K562 (cell line): ENCODE measurements at regions of chr21 and their contacts with region 1.

Region 1: DNA sequence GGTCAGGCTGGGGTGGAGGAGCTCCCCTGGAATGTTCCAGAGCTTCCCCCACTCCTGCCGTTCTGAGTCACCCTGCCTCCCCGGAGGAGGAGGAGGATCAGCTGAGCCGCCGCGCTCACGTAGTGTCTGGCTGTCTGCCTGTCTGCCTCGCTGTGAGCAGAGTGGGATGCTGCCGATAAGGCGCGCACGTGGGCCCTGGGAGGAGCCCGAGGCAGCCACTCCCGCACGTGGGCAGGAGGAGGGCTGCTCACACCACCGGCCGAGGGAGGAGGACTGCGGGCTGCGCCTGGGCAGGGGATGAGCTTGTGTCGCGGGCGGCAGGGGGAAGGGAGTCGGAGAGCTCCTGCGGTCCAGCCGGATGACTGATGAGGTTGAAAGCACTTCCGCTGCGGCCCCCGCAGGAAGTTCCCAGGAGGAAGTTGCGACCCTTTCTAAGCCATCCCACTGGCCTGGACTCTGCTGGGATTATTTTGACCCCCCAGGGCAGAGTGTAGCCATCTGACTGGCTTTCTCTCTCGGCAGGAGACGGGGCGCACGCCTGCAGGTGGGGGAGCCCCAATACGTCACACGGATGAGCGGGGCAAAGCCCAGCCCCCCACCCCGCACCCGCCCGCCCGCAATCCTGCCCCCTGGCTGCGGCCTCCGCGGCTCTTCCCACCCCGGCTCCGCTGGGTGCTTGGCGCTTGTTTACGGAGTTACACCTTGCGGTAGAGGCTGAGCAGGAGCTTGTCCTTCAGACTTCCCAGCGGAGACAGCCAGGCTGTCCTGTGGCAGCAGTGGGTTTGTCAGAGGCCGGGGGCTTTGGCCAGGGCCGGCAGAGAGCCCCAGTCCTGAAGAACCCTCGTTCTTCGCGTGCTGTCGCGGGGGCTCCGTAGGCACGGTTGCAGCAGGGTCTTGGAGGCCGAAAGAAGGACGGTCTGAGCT is 9.8 kb downstream of the PDXK start:
- DNase-seq: peak; percentile 95 to 99 (median 96)
- ATAC-seq: peak; percentile 97
- H3K4me3 ChIP-seq: peak overlapping the region; percentile 62
- H3K27ac ChIP-seq: peak overlapping the region; percentile 79
- H3K4me1 ChIP-seq: peaks cover 25 to 59% of the 10 kb centered on the region in 2 experiments
- H3K27me3 ChIP-seq: no peaks in the 10 kb centered on the region
- CTCF ChIP-seq: peak in 2 of 3 experiments; percentile 24 to 54; a peak in 3 of 6 replicates
- EP300 ChIP-seq: peak; percentile 81
- POLR2A ChIP-seq: peak; percentile 72
- RAD21 ChIP-seq: peak in 1 of 2 experiments; percentile 51; a peak in 2 of 4 replicates

Region 2: GRCh38 chr21:43664358-43664757 is 64.4 kb before region 1 on chr21:
- CTCF ChIA-PET with region 1: no interaction called
- POLR2A ChIA-PET with region 1: interaction called, 5 read pairs
- in situ Hi-C with region 1: no loop called
- intact Hi-C with region 1: loop called (anchors 5 kb)
- DNase-seq: no peak
- ATAC-seq: no peak
- H3K4me3 ChIP-seq: no peak overlapping the region
- H3K27ac ChIP-seq: no peak overlapping the region
- H3K4me1 ChIP-seq: peaks cover 4 to 6% of the 10 kb centered on the region in 2 experiments; a peak in 3 of 5 replicates
- H3K27me3 ChIP-seq: no peaks in the 10 kb centered on the region
- CTCF ChIP-seq: no peak
- EP300 ChIP-seq: no peak
- POLR2A ChIP-seq: no peak
- RAD21 ChIP-seq: no peak

Region 3: DNA sequence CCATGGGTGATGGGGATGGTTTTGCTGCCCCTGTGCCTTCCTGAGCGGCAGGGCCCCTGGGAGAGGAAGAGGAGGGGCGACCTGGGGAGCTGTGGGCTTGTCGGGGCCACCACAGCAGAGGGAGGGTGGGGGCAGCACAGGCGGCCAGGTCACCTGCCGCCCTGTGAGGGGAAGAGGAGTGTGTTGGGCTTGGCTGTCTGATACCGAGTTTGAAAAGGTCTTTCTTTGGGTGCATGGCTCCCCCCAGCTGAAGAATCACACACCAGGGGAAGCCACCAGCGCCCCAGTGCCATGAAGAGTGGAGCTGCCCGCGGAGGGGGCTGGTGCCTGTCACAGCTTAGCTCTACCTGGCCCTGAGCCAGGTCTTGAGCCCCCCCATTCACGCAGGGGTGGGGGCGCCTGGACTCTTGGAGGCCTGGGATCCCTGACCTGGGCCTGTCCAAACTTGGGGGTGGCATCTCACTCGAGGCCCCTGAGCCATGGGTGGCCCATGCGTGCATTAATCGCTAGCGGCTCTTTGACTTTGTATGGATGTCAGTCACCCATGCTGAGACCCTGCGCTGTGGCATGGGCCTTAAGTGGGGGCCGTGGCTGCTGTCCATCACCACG is 21.0 kb after region 1 on chr21:
- CTCF ChIA-PET with region 1: no interaction called
- POLR2A ChIA-PET with region 1: interaction called, 10 read pairs
- in situ Hi-C with region 1: no loop called
- intact Hi-C with region 1: no loop called
- DNase-seq: no peak
- ATAC-seq: no peak
- H3K4me3 ChIP-seq: no peak overlapping the region
- H3K27ac ChIP-seq: no peak overlapping the region
- H3K4me1 ChIP-seq: peaks cover 7 to 36% of the 10 kb centered on the region in 2 experiments; a peak in 4 of 5 replicates
- H3K27me3 ChIP-seq: no peaks in the 10 kb centered on the region
- CTCF ChIP-seq: no peak
- EP300 ChIP-seq: no peak
- POLR2A ChIP-seq: no peak
- RAD21 ChIP-seq: no peak

Region 4: GRCh38 chr21:43775795-43776430 is 47.2 kb after region 1 on chr21 and contains the start of gene CSTB:
- CTCF ChIA-PET with region 1: no interaction called
- POLR2A ChIA-PET with region 1: interaction called, 6 read pairs
- in situ Hi-C with region 1: no loop called
- intact Hi-C with region 1: loop called (anchors 1 kb)
- DNase-seq: peak in 2 of 4 experiments; percentile 76 to 88
- ATAC-seq: peak; percentile 83
- H3K4me3 ChIP-seq: peak within 1 kb of the TSS; percentile 88
- H3K27ac ChIP-seq: peak within 1 kb of the TSS; percentile 87
- H3K4me1 ChIP-seq: peaks cover 23 to 63% of the 10 kb centered on the region in 2 experiments
- H3K27me3 ChIP-seq: no peaks in the 10 kb centered on the region
- CTCF ChIP-seq: peak in 2 of 3 experiments; percentile 8 to 9; a peak in 1 of 6 replicates
- EP300 ChIP-seq: no peak
- POLR2A ChIP-seq: peak; percentile 83
- RAD21 ChIP-seq: no peak
- polyA plus RNA-seq, gene CSTB: 12.4 to 17.1 TPM

Region 5: GRCh38 chr21:43902441-43902840 is 173.7 kb after region 1 on chr21:
- CTCF ChIA-PET with region 1: no interaction called
- POLR2A ChIA-PET with region 1: no interaction called
- in situ Hi-C with region 1: no loop called
- intact Hi-C with region 1: no loop called
- DNase-seq: peak in 2 of 4 experiments; percentile 22 to 38
- ATAC-seq: no peak; the same call in 2 of the 3 replicates
- H3K4me3 ChIP-seq: no peak overlapping the region
- H3K27ac ChIP-seq: no peak overlapping the region
- H3K4me1 ChIP-seq: peaks cover 5 to 30% of the 10 kb centered on the region in 2 experiments; a peak in 2 of 5 replicates
- H3K27me3 ChIP-seq: no peaks in the 10 kb centered on the region
- CTCF ChIP-seq: no peak
- EP300 ChIP-seq: no peak
- POLR2A ChIP-seq: no peak
- RAD21 ChIP-seq: no peak